Gastrocnemius medialis (tissue), 4 donors: ENCODE measurements at regions of chr4 and their contacts with region 1.

Region 1: DNA sequence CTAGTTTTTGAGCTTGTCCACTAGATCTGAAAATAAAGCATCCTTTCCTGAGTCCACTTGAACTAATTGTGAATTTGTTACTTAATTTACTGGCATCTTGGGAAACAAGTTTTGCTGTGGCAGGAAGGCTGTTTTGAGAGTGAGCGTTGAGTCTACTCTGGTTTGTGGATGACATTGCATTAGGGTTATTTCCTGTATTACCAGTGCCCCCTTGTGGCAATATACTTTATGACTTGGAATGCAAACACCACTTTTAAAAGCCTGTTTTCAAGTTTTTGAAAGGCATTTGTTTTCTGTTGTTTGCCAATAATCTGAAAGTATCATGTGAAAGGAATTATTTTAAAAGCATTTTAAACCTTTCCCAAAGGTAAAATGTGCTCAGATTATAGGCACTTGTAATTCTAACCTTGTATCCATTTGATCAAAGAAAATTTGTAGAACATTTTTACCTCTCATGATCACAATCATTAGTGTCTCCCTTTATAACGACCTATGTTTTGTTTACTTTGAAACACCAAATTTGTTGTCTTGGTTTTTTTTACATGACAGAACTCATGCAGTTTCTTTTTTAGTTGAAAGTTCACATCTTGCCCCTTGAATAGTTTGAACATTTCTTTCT is 18.0 kb upstream of the CYP2U1 start:
- DNase-seq: peak in 1 of 2 donors; percentile 19
- ATAC-seq: peak; percentile 80 to 93
- H3K4me3 ChIP-seq: no peak overlapping the region
- H3K27ac ChIP-seq: no peak overlapping the region
- H3K4me1 ChIP-seq: no peaks in the 10 kb centered on the region
- H3K27me3 ChIP-seq: no peaks in the 10 kb centered on the region
- CTCF ChIP-seq: peak; percentile 75 to 85 (median 81)
- POLR2A ChIP-seq: no peak

Region 2: GRCh38 chr4:107757864-107758476 is 155.4 kb before region 1 on chr4:
- in situ Hi-C with region 1: loop called (anchors 5 kb)
- intact Hi-C with region 1: loop called (anchors 1 kb)
- DNase-seq: no peak
- ATAC-seq: peak in 1 of 2 donors; percentile 65
- H3K4me3 ChIP-seq: no peak overlapping the region
- H3K27ac ChIP-seq: no peak overlapping the region
- H3K4me1 ChIP-seq: no peaks in the 10 kb centered on the region
- H3K27me3 ChIP-seq: no peaks in the 10 kb centered on the region
- CTCF ChIP-seq: peak; percentile 54 to 74 (median 61)
- POLR2A ChIP-seq: no peak